ENCODE measurements at regions of chr17 and their contacts with region 1.

Region 1: DNA sequence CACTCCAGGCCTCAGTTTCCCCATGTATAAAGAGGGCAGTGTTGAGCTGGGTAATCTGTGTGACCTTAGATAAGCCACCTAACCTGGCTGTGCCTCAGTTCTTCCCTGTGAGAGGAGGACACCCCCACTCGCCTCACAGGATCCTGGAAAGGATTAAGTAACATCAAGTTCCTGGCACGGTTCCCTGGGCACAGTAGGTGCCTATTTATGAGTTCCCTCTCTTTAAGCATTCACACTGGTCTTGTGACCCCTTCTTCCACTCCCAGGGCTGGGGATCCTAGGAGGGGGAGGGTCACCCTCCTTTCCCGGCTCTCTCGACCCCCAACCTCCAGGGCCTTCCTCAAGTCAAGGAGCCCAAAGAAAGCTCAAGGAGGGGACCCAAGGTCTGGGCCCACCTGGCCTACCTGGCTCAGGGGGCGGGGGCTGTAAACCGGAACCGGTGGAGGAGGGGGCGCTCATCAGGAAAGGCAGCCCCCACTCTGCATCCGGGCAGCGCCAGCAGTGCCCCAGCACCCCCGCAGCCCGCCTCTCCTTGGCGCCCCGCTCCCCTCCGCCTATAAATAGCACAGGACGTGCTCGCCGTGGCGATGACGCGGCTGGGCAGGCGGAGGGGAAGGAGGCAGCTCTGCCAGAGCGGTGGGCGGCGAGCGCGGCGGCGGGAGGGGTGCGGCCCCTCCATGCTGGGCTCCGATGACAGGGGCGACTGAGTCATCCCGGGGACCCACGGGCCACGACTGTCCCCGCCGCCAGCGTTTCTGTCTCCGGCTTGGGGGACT is 9.4 kb downstream of the RPL19 start:
- DNase-seq: peak; percentile 79 to 94
- H3K4me3 ChIP-seq: peak overlapping the region; percentile 32 to 68
- H3K27ac ChIP-seq: peak overlapping the region; percentile 82 to 94
- H3K4me1 ChIP-seq: peaks cover 16 to 30% of the 10 kb centered on the region in 2 donors
- H3K27me3 ChIP-seq: no peaks in the 10 kb centered on the region
- CTCF ChIP-seq: no peak

Region 2: GRCh38 chr17:39225959-39226683 is 16.6 kb after region 1 on chr17:
- intact Hi-C with region 1: loop called (anchors 2 kb)
- DNase-seq: peak; percentile 60 to 93
- H3K4me3 ChIP-seq: peak overlapping the region; percentile 59 to 75
- H3K27ac ChIP-seq: peak overlapping the region; percentile 85 to 87
- H3K4me1 ChIP-seq: peaks cover 13 to 30% of the 10 kb centered on the region in 2 donors
- H3K27me3 ChIP-seq: no peaks in the 10 kb centered on the region
- CTCF ChIP-seq: no peak

Region 3: GRCh38 chr17:39244600-39245570 is 35.4 kb after region 1 on chr17:
- intact Hi-C with region 1: loop called (anchors 1 kb)
- DNase-seq: peak in 1 of 2 donors; percentile 95
- H3K4me3 ChIP-seq: no peak overlapping the region
- H3K27ac ChIP-seq: no peak overlapping the region
- H3K4me1 ChIP-seq: peaks cover 0 to 4% of the 10 kb centered on the region in 2 donors
- H3K27me3 ChIP-seq: no peaks in the 10 kb centered on the region
- CTCF ChIP-seq: peak; percentile 81 to 94 (median 89)

Region 4: DNA sequence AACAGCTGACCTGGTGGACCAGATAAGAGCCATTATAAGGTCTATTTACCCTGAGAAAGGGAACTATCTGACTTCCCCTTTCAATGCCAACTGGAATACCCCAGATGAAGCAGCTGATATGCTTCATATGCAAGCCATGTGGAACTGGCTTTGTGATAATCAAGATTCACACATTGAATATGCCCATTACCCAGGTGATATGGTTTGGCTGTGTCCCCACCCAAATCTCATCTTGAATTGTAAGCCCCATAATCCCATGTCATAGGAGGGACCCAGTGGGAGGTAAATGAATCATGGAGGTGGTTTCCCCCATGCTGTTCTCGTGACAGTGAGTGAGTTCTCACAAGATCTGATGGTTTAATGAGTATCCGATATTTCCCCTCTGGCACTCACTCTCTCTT is 612.5 kb after region 1 on chr17:
- intact Hi-C with region 1: no loop called
- DNase-seq: no peak
- H3K4me3 ChIP-seq: no peak overlapping the region
- H3K27ac ChIP-seq: no peak overlapping the region
- H3K4me1 ChIP-seq: no peaks in the 10 kb centered on the region
- H3K27me3 ChIP-seq: no peaks in the 10 kb centered on the region
- CTCF ChIP-seq: no peak

Measured in ascending aorta (tissue), 2 donors.